Posterior cingulate gyrus (tissue), 11 donors: ENCODE measurements at regions of chr6 and their contacts with region 1.

Region 1: DNA sequence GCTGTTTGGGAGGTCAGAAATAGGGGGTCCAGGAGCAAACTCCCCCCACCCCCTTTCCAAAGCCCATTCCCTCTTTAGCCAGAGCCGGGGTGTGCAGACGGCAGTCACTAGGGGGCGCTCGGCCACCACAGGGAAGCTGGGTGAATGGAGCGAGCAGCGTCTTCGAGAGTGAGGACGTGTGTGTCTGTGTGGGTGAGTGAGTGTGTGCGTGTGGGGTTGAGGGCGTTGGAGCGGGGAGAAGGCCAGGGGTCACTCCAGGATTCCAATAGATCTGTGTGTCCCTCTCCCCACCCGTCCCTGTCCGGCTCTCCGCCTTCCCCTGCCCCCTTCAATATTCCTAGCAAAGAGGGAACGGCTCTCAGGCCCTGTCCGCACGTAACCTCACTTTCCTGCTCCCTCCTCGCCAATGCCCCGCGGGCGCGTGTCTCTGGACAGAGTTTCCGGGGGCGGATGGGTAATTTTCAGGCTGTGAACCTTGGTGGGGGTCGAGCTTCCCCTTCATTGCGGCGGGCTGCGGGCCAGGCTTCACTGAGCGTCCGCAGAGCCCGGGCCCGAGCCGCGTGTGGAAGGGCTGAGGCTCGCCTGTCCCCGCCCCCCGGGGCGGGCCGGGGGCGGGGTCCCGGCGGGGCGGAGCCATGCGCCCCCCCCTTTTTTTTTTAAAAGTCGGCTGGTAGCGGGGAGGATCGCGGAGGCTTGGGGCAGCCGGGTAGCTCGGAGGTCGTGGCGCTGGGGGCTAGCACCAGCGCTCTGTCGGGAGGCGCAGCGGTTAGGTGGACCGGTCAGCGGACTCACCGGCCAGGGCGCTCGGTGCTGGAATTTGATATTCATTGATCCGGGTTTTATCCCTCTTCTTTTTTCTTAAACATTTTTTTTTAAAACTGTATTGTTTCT is at the start of gene VEGFA:
- DNase-seq: peak; percentile 78 to 98 (median 92)

Region 2: GRCh38 chr6:43667245-43668150 is 102.3 kb before region 1 on chr6:
- intact Hi-C with region 1: loop called (anchors 5 kb)
- DNase-seq: peak; percentile 71 to 98 (median 90)

Region 3: DNA sequence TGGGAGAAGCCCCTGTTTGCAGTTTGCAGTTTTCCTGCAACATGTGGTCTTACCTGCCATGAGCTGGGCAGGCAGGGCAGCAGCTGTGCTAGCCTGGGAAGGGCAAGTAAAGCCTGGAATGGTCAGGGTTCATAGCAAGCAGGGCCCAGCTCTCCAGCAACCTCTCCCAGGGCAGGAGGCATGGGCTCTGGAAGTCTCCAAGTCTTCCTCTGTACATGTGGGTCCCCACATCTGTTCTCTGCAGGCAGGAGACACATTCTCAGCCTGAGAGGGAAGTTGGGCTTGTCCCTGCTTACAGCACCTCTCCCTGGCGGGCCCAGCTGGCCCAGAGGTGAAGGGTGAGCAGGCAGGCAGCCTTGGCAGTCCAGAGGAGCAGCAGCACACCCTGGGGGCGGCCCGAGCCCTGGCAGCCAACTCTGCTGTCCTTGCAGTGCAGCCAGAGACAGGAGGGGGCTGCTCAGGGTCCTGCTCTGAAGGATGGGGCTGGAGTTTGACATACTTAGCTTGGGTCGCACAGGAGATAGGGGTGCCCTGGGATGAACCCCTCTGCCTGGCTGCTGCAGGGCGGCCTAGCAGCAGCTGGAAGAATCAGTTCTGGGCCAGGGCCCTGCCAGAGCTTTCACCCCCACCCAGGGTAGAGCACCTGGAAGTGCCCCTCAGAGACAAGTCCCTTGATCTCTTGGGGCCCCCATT is 181.4 kb after region 1 on chr6:
- intact Hi-C with region 1: loop called (anchors 10 kb)
- DNase-seq: peak in 2 of 10 donors; percentile 15 to 87

Region 4: GRCh38 chr6:44002593-44003344 is 233.0 kb after region 1 on chr6:
- intact Hi-C with region 1: loop called (anchors 2 kb)
- DNase-seq: peak in 4 of 10 donors; percentile 24 to 87 (median 58)

Region 5: GRCh38 chr6:44074439-44075136 is 304.8 kb after region 1 on chr6:
- intact Hi-C with region 1: loop called (anchors 1 kb)
- DNase-seq: peak; percentile 63 to 96 (median 81)